ENCODE measurements at regions of chr3 and their contacts with region 1.

Region 1: DNA sequence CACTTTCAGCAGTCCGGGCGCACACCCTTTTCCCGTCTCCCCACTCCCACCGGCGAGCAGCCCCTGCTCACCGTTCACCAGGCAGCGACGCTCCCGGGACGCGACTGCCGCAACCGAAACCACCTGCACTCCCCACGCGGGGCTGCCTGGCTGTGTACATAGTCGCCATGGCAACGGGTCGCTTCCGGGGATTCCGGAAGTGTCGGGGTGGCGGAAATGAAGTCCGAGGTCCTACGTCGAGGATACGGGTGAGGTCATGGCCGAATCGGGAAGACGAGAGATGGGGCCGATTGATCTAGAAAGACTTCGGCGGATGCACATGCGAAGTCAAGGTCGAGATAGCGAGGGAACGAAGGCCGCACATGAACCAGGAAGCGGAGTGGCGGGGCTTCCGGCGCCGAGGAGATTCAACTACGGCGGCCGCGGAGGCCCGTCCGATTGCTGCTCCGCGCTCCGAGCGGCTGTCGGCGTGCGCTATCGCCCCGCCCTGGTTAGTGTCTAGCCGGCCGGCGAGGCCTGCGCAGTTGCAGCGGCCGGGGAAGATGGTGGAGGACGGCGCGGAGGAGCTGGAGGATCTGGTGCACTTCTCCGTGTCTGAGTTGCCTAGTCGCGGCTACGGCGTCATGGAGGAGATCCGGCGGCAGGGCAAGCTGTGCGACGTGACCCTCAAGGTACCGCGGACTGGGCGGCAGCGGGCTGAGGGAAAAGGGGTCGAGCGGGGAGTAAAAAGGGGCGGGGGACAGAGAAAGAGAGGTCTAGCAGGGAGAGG is at the starts of genes KIF9 and KLHL18:
- DNase-seq: peak; percentile 96
- H3K4me3 Mint-ChIP-seq: peak within 1 kb of the TSS; percentile 98
- H3K27ac Mint-ChIP-seq: peak within 1 kb of the TSS; percentile 95
- H3K4me1 Mint-ChIP-seq: peaks cover 33% of the 10 kb centered on the region
- H3K27me3 Mint-ChIP-seq: no peaks in the 10 kb centered on the region
- total RNA-seq, gene KIF9: 3.1 to 3.4 TPM
- total RNA-seq, gene KLHL18: 19.4 to 21.2 TPM

Region 2: GRCh38 chr3:47202542-47202941 is 80.1 kb before region 1 on chr3:
- CTCF ChIA-PET with region 1: no interaction called
- POLR2A ChIA-PET with region 1: no interaction called
- DNase-seq: no peak
- H3K4me3 Mint-ChIP-seq: no peak overlapping the region
- H3K27ac Mint-ChIP-seq: no peak overlapping the region
- H3K4me1 Mint-ChIP-seq: no peaks in the 10 kb centered on the region
- H3K27me3 Mint-ChIP-seq: no peaks in the 10 kb centered on the region

Region 3: DNA sequence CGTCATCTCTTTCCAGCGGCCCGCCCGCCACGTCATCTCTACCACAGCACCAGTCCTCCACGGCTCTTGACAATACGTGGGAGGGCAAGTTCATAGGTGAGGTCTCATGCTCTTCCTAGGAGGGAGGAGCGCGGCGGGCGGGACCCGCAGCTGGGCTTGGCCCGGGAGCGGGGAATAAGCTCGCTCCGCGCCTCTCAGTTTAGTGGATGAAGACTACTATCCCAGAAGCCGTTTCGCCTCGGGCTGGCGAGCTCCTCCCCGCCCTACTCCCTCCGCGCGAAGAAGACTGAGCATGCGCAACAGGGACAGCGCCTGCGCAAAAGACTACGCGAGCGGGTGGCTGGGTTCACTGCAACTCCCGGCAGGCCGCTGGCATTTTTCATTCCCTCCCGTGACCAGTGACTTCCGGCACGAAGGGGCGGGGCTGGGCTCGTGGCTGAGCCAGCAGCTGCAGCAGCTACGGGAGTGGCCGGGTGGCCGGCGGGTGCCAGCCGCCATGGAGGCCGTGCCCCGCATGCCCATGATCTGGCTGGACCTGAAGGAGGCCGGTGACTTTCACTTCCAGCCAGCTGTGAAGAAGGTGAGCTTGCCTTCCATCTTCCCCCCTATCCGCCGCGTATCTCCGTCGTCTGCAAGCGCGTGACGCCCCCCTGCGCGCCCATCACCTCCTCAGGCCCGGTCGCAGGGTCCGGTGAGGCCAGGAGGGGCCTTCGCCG is 98.2 kb after region 1 on chr3 and contains the start of gene PTPN23:
- CTCF ChIA-PET with region 1: no interaction called
- POLR2A ChIA-PET with region 1: interaction called, 16 read pairs
- DNase-seq: peak; percentile 99
- H3K4me3 Mint-ChIP-seq: peak within 1 kb of the TSS; percentile 99
- H3K27ac Mint-ChIP-seq: peak within 1 kb of the TSS; percentile 98
- H3K4me1 Mint-ChIP-seq: peaks cover 52% of the 10 kb centered on the region
- H3K27me3 Mint-ChIP-seq: no peaks in the 10 kb centered on the region
- total RNA-seq, gene PTPN23: 26.8 to 28.7 TPM

Measured in activated CD4-positive, alpha-beta memory T cell treated with anti-CD3 and anti-CD28 coated beads, Interleukin-2, amount 10 ng/mL, durations not matched to agents 7 days and 5 days (primary cell).